A673 (cell line): ENCODE measurements at regions of chr9 and their contacts with region 1.

Region 1: GRCh38 chr9:80503671-80504281 is 932.0 kb downstream of the TLE4 start:
- DNase-seq: peak; percentile 20
- H3K4me3 ChIP-seq: no peak overlapping the region
- H3K27ac ChIP-seq: no peak overlapping the region
- H3K4me1 ChIP-seq: peaks cover 4% of the 10 kb centered on the region
- H3K27me3 ChIP-seq: no peaks in the 10 kb centered on the region
- CTCF ChIP-seq: no peak

Region 2: DNA sequence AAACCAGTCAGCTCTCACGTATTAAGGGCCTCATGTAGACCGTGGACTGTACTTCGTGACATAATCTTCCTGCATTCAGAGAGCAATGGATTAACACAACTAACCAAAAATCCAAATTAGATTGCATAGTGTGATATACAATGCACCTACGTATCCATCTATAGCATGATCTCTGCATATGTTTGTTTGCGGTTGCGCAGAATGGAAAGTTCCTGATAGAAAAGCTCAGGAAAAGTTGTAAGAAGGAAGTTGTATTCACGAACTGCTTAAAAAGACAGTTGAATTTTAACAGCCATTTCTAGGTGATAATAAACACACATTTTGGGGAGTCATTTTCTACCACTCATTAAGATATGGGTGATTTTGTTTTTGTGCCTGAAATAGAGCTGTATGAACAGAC is 63.1 kb before region 1 on chr9:
- CTCF ChIA-PET with region 1: no interaction called
- POLR2A ChIA-PET with region 1: no interaction called
- intact Hi-C with region 1: loop called (anchors 10 kb)
- DNase-seq: peak; percentile 51
- H3K4me3 ChIP-seq: no peak overlapping the region
- H3K27ac ChIP-seq: no peak overlapping the region
- H3K4me1 ChIP-seq: peaks cover 26% of the 10 kb centered on the region
- H3K27me3 ChIP-seq: no peaks in the 10 kb centered on the region
- CTCF ChIP-seq: no peak

Region 3: GRCh38 chr9:80467632-80468031 is 36.1 kb before region 1 on chr9:
- CTCF ChIA-PET with region 1: no interaction called
- POLR2A ChIA-PET with region 1: no interaction called
- intact Hi-C with region 1: no loop called
- DNase-seq: no peak
- H3K4me3 ChIP-seq: no peak overlapping the region
- H3K27ac ChIP-seq: no peak overlapping the region
- H3K4me1 ChIP-seq: no peaks in the 10 kb centered on the region
- H3K27me3 ChIP-seq: no peaks in the 10 kb centered on the region
- CTCF ChIP-seq: no peak